Transverse colon (tissue), 4 donors: ENCODE measurements at regions of chr18 and their contacts with region 1.

Region 1: DNA sequence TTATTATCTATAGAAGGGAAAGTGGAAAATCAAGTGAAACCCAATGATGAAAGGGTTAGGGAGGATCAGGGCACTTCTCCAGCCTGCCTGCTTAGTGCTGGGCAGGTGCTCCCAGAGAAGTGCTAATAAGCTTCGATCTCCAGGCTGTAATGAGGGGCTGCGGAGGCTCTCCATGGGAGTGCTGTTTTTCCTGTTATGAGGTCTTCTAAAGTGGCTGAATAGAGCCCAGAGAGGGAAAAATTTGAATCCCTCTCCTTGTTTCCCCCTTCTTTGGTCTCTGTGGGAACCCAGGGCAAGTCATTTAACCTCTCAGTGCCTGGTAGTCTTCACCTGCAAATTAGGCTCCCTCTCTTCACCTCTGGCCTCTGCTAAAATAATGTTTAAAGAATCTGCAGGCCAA is 351.7 kb upstream of the DCC start:
- DNase-seq: no peak
- H3K4me3 ChIP-seq: no peak overlapping the region
- H3K27ac ChIP-seq: no peak overlapping the region
- H3K4me1 ChIP-seq: no peaks in the 10 kb centered on the region
- H3K27me3 ChIP-seq: no peaks in the 10 kb centered on the region
- CTCF ChIP-seq: no peak
- EP300 ChIP-seq: no peak
- POLR2A ChIP-seq: no peak

Region 2: DNA sequence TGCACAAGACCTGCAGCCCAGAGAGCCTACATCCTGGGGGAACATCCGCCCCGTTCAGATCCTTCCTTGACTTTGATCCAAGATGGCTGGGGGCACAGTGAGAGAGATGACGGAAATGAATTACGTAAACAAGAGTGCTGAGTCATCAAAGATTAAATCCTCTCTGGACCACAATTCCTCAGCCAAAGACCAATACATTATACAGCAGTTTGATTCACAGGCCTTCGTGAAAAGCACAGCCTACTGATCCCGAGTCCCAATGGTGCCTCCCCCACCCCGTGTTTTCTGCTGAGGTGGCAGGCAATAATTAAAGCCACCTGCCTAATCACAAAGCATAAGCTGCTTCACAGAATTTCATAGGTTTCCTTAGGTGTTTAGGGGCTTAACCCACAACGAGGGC is 1836.4 kb before region 1 on chr18:
- in situ Hi-C with region 1: no loop called
- intact Hi-C with region 1: no loop called
- DNase-seq: no peak
- H3K4me3 ChIP-seq: no peak overlapping the region
- H3K27ac ChIP-seq: no peak overlapping the region
- H3K4me1 ChIP-seq: peaks cover 0 to 17% (median 5%) of the 10 kb centered on the region in 4 donors
- H3K27me3 ChIP-seq: no peaks in the 10 kb centered on the region
- CTCF ChIP-seq: no peak
- EP300 ChIP-seq: no peak
- POLR2A ChIP-seq: no peak

Region 3: DNA sequence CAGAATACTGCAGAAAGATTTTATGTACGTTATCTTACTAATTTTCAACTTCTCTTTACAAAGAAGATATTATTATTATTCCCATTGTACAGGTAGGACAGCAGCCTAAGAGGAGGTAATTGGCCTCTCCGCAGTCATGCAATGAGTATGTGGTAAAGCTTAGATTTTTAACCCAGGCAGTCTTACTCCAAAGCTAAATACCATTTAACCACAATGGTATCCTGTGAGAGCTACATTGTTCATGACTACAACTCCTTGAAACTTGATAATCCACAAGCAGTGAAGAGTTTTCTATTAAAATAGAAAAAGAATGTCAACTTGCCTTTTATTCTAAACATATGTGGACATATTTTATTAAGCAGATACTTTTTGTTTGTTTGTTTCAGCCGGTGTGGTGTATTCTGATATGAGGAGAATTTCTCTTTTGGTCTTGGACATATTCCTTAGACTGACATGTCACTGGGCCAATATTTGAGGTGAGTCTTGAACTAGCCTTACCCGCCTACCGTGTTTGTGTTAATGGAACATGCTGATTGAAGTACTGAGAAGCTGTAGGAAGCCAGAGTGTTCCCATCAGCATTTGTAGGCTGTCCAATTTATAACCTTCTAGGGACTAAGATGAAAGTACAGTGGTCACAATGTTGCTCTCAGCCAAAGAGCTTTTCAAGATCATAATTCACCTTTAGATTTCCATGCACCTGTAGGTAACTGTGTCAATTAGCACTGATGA is 57.8 kb after region 1 on chr18:
- in situ Hi-C with region 1: loop called in 1 of 4 experiments (anchors 10 kb)
- intact Hi-C with region 1: no loop called
- DNase-seq: no peak
- H3K4me3 ChIP-seq: no peak overlapping the region
- H3K27ac ChIP-seq: no peak overlapping the region
- H3K4me1 ChIP-seq: no peaks in the 10 kb centered on the region
- H3K27me3 ChIP-seq: no peaks in the 10 kb centered on the region
- CTCF ChIP-seq: no peak
- EP300 ChIP-seq: no peak
- POLR2A ChIP-seq: no peak